ENCODE measurements at regions of chr9 and their contacts with region 1.

Region 1: DNA sequence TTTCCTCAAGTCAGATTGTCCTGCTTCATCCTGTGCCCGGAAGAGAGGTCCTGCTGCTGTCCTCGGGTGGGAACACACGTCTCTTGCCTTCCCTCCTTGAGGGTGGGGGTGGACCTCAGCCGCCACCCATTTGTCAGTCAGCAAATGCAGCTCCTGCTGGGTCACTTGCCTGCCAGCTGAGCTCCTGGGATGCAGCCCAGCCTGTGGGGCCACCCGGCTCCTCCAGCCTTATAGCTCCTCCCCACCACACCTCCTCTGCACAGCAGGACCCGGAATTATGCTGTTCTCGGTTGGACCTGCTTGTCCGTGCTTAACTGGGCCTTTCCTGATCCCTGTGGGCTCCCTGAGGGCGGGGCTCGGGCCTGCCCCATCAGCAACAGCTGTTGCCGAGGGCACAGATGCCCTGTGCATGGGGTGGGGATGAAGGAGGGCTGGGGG is 52.7 kb downstream of the RXRA start:
- DNase-seq: peak; percentile 91
- H3K27ac ChIP-seq: peak overlapping the region; percentile 99
- CTCF ChIP-seq: no peak

Region 2: GRCh38 chr9:134175808-134176598 is 202.9 kb before region 1 on chr9:
- CTCF ChIA-PET with region 1: interaction called, 14 read pairs
- POLR2A ChIA-PET with region 1: no interaction called
- DNase-seq: no peak
- H3K27ac ChIP-seq: no peak overlapping the region
- CTCF ChIP-seq: no peak; the same call in 1 of the 2 replicates

Region 3: GRCh38 chr9:134365791-134366688 is 12.9 kb before region 1 on chr9:
- CTCF ChIA-PET with region 1: interaction called, 3 read pairs
- POLR2A ChIA-PET with region 1: interaction called, 15 read pairs
- DNase-seq: peak; percentile 97
- H3K27ac ChIP-seq: peak overlapping the region; percentile 100
- CTCF ChIP-seq: peak; percentile 65

Region 4: GRCh38 chr9:134443168-134444037 is 64.5 kb after region 1 on chr9:
- CTCF ChIA-PET with region 1: interaction called, 15 read pairs
- POLR2A ChIA-PET with region 1: interaction called, 3 read pairs
- DNase-seq: peak; percentile 99
- H3K27ac ChIP-seq: peak overlapping the region; percentile 84
- CTCF ChIP-seq: peak; percentile 100

Region 5: DNA sequence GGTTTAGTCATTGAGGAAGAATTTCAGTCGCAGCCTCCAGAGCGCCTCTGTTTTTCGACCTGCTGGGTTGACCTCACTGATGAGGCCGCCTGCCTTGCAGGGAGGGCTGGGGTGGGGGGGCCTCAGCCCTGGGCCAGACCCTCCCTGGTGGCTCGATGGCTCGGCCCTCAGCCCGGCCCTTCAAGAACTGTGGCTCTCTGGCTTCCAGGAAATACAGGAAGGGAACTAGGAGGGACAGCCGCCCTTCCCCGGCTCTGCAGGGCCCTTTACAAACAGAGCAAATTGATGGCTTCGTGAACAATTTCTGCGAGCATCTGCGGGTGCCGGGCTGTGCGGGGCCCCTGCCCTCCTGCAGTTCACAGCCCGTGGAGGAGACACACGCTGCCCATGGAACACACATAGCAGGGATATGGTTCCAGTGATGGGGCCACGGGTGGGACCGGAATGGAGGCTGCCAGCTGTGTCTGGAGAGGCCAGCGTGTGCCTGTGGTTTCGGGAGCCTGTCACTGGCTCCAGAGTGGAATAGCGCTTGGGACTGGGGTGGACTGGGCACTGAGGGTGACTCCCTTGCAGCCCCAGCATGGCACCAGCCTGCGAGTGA is 302.2 kb after region 1 on chr9:
- CTCF ChIA-PET with region 1: no interaction called
- POLR2A ChIA-PET with region 1: no interaction called
- DNase-seq: no peak
- H3K27ac ChIP-seq: peak overlapping the region; percentile 9; the same call in 1 of the 2 replicates
- CTCF ChIP-seq: no peak

Measured in RWPE1 (cell line).